ENCODE measurements at regions of chr12 and their contacts with region 1.

Region 1: DNA sequence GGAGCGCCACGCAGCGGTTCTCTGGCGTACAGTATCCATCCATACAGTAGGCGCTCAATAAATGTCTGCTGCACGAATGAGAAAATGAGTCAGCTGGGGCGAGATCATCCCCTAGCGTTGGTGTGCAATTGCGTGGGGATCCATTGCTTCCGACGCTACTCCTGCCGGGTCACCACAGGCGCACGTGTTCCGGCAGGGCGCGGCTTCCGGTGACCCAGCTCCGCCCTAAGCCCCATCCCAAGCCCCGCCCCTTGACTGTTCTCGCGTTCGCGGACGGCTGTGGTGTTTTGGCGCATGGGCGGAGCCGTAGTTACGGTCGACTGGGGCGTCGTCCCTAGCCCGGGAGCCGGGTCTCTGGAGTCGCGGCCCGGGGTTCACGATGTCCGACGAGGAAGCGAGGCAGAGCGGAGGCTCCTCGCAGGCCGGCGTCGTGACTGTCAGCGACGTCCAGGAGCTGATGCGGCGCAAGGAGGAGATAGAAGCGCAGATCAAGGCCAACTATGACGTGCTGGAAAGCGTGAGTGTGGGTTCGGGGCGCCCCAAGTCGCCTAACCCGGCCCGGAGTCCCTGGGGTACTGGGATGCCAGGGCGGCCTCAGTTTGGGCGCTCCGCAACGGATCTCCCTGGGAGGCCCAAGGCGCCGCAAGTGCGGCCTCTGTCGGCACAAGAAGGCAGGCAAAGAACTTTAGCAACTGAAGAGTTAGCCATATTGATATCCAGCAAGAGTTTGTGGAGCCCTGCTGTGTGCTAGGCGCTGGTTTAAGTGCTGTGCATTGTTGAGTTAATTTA is at the start of gene PSMD9:
- DNase-seq: peak; percentile 97
- ATAC-seq: peak; percentile 95
- H3K4me3 Mint-ChIP-seq: peak within 1 kb of the TSS; percentile 98
- H3K27ac Mint-ChIP-seq: peak within 1 kb of the TSS; percentile 98
- H3K4me1 Mint-ChIP-seq: peaks cover 29% of the 10 kb centered on the region
- H3K27me3 Mint-ChIP-seq: peaks cover 2% of the 10 kb centered on the region
- CTCF ChIP-seq: no peak
- total RNA-seq, gene PSMD9: 35.9 and 40.2 TPM in 2 replicates

Region 2: GRCh38 chr12:121688966-121689365 is 199.7 kb before region 1 on chr12:
- CTCF ChIA-PET with region 1: no interaction called
- POLR2A ChIA-PET with region 1: no interaction called
- intact Hi-C with region 1: loop called (anchors 1 kb)
- DNase-seq: no peak
- ATAC-seq: no peak
- H3K4me3 Mint-ChIP-seq: no peak overlapping the region
- H3K27ac Mint-ChIP-seq: no peak overlapping the region
- H3K4me1 Mint-ChIP-seq: peaks cover 7% of the 10 kb centered on the region
- H3K27me3 Mint-ChIP-seq: no peaks in the 10 kb centered on the region
- CTCF ChIP-seq: no peak

Region 3: DNA sequence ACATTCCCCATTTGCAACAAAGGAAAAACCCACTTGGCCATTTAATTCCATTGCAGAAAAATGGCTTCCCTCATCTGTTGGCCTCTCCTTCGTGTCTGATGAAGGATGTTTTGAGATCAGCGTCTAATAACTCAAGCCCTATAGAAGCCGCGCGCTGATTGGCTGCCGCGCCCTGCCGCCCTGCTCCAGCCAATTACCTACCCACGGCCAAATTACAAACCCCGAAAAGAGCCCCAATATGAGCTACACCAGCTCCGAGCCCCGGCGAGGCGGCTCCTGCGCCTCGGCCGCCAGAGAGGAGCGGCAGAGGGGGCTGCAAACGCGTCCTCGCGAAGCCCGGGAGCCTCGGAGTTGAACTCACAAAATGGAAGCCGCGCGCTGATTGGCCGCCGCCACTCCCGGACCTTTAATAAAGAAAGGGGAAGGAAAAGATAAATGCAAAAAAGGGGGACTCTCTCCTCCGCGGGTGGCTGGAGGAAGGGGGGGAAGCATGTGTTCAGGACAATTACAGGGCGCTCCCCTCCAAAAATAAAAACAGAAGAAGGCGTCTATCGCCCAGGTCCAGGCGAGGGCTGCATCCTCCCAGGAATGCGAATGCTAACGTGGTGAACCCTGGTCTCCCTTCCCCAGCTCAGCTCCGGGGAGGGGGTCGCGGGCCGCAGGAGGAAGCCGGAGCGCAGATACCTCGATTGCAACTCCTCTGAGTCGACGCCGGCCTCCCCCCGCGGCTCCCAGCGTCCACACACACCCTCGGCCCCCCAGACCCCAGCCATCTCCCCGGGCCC is 85.6 kb before region 1 on chr12:
- CTCF ChIA-PET with region 1: interaction called, 8 read pairs
- POLR2A ChIA-PET with region 1: interaction called, 16 read pairs
- intact Hi-C with region 1: no loop called
- DNase-seq: peak; percentile 91
- ATAC-seq: peak; percentile 40
- H3K4me3 Mint-ChIP-seq: peak overlapping the region; percentile 93
- H3K27ac Mint-ChIP-seq: peak overlapping the region; percentile 100
- H3K4me1 Mint-ChIP-seq: peaks cover 57% of the 10 kb centered on the region
- H3K27me3 Mint-ChIP-seq: no peaks in the 10 kb centered on the region
- CTCF ChIP-seq: no peak

Region 4: GRCh38 chr12:122013791-122014590 is 125.3 kb after region 1 on chr12:
- CTCF ChIA-PET with region 1: no interaction called
- POLR2A ChIA-PET with region 1: no interaction called
- intact Hi-C with region 1: no loop called
- DNase-seq: no peak
- ATAC-seq: no peak
- H3K4me3 Mint-ChIP-seq: no peak overlapping the region
- H3K27ac Mint-ChIP-seq: peak overlapping the region; percentile 18
- H3K4me1 Mint-ChIP-seq: peaks cover 24% of the 10 kb centered on the region
- H3K27me3 Mint-ChIP-seq: no peaks in the 10 kb centered on the region
- CTCF ChIP-seq: no peak

Region 5: GRCh38 chr12:122225683-122226407 is 337.2 kb after region 1 on chr12 and contains the start of gene DIABLO:
- CTCF ChIA-PET with region 1: no interaction called
- POLR2A ChIA-PET with region 1: interaction called, 5 read pairs
- intact Hi-C with region 1: loop called (anchors 1 kb)
- DNase-seq: peak; percentile 99
- ATAC-seq: peak; percentile 93
- H3K4me3 Mint-ChIP-seq: peak within 1 kb of the TSS; percentile 89
- H3K27ac Mint-ChIP-seq: peak within 1 kb of the TSS; percentile 89
- H3K4me1 Mint-ChIP-seq: peaks cover 26% of the 10 kb centered on the region
- H3K27me3 Mint-ChIP-seq: no peaks in the 10 kb centered on the region
- CTCF ChIP-seq: no peak
- total RNA-seq, gene DIABLO: 39.8 and 51.3 TPM in 2 replicates

Region 6: DNA sequence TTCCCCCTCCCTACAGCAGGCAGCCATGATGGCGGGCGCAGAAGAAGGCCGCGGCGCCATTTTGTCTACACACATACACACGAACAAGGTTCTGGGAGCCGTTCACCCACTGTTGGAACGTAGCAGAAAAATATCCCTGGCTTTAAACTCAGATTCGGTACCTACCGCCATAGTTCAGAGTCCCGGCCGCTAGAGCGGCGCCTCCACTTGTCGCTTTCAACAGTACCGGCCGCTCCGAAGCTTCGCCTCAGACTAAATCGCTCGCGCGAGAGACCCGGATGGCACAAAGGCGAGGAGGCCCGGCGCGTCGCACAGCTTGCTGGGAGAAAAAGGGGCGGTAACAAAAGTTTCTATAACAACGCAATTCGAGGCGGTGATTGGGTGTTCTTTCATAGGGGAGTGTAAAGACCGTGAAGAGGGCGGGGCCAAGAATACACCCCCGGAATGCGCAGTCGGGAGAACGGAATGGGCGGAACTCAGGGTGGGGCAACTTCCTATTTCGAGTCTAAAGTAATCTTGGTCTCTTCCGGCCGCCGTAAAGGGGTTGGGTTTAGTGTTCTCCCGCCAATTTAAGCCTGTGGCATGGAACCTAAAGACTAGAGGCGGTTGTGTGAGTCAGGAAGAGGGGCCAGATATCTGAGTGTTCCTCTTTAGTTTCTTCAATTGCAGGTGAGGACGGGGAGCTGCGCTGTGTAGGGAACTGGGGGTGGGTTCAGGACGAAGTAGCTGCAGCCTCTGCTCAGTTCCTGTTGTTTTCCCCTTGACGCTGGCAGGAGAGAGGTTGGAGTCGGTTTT is 638.2 kb after region 1 on chr12 and contains the starts of genes KNTC1 and RSRC2:
- CTCF ChIA-PET with region 1: no interaction called
- POLR2A ChIA-PET with region 1: no interaction called
- intact Hi-C with region 1: loop called (anchors 2 kb)
- DNase-seq: peak; percentile 85
- ATAC-seq: peak; percentile 91
- H3K4me3 Mint-ChIP-seq: no peak within 1 kb of the TSS
- H3K27ac Mint-ChIP-seq: no peak within 1 kb of the TSS
- H3K4me1 Mint-ChIP-seq: peaks cover 43% of the 10 kb centered on the region
- H3K27me3 Mint-ChIP-seq: no peaks in the 10 kb centered on the region
- CTCF ChIP-seq: no peak
- total RNA-seq, gene KNTC1: 45.5 and 64.0 TPM in 2 replicates
- total RNA-seq, gene RSRC2: 106 and 126 TPM in 2 replicates

Measured in activated B cell treated with CpG ODN at 0.5 μM for 24 hours (primary cell).